AG04450 (cell line): ENCODE measurements at regions of chr13 and their contacts with region 1.

Region 1: GRCh38 chr13:85582890-85583289 is 216.3 kb downstream of the SLITRK6 start:
- DNase-seq: no peak
- H3K4me3 ChIP-seq: no peak overlapping the region
- H3K27ac ChIP-seq: no peak overlapping the region
- H3K27me3 ChIP-seq: no peaks in the 10 kb centered on the region
- CTCF ChIP-seq: no peak

Region 2: DNA sequence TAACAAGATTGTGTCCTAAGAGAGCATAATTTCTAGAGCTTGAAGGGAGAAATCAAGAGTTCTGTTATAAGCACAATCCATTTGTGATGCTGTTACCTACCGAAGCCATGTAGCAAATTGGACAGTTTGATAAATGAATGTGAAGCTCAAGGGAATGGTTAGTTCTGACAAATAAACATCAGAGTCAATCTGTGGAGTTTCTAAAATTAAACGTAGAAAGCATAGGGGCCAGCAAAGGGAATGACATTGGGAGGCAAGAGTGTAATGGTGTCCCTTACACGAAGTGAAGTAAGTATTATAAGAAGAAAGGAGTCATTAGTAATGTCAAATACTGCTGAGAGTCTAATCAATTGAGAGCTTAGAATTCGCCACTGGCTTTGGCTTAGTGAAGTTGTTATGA is 1500.4 kb before region 1 on chr13:
- CTCF ChIA-PET with region 1: interaction called, 11 read pairs
- POLR2A ChIA-PET with region 1: no interaction called
- DNase-seq: no peak
- H3K4me3 ChIP-seq: no peak overlapping the region
- H3K27ac ChIP-seq: no peak overlapping the region
- H3K27me3 ChIP-seq: no peaks in the 10 kb centered on the region
- CTCF ChIP-seq: no peak

Region 3: GRCh38 chr13:86066611-86067365 is 483.9 kb after region 1 on chr13:
- CTCF ChIA-PET with region 1: no interaction called
- POLR2A ChIA-PET with region 1: no interaction called
- DNase-seq: no peak
- H3K4me3 ChIP-seq: no peak overlapping the region
- H3K27ac ChIP-seq: no peak overlapping the region
- H3K27me3 ChIP-seq: no peaks in the 10 kb centered on the region
- CTCF ChIP-seq: no peak